Caco-2 (cell line): ENCODE measurements at regions of chr1 and their contacts with region 1.

Region 1: GRCh38 chr1:221741711-221742554 is at the start of gene DUSP10:
- DNase-seq: peak; percentile 97 to 98
- H3K4me3 ChIP-seq: peak within 1 kb of the TSS; percentile 68
- H3K4me3 Mint-ChIP-seq: no peak within 1 kb of the TSS
- H3K27ac Mint-ChIP-seq: no peak within 1 kb of the TSS
- H3K4me1 ChIP-seq: 0 out of 2 replicates have a peak, but pooled peaks cover 7% of the 10 kb centered on the region
- H3K4me1 Mint-ChIP-seq: no peaks in the 10 kb centered on the region
- H3K27me3 ChIP-seq: no peaks in the 10 kb centered on the region
- H3K27me3 Mint-ChIP-seq: no peaks in the 10 kb centered on the region
- CTCF ChIP-seq: no peak
- total RNA-seq, gene DUSP10: 2.0 and 2.1 TPM in 2 replicates

Region 2: DNA sequence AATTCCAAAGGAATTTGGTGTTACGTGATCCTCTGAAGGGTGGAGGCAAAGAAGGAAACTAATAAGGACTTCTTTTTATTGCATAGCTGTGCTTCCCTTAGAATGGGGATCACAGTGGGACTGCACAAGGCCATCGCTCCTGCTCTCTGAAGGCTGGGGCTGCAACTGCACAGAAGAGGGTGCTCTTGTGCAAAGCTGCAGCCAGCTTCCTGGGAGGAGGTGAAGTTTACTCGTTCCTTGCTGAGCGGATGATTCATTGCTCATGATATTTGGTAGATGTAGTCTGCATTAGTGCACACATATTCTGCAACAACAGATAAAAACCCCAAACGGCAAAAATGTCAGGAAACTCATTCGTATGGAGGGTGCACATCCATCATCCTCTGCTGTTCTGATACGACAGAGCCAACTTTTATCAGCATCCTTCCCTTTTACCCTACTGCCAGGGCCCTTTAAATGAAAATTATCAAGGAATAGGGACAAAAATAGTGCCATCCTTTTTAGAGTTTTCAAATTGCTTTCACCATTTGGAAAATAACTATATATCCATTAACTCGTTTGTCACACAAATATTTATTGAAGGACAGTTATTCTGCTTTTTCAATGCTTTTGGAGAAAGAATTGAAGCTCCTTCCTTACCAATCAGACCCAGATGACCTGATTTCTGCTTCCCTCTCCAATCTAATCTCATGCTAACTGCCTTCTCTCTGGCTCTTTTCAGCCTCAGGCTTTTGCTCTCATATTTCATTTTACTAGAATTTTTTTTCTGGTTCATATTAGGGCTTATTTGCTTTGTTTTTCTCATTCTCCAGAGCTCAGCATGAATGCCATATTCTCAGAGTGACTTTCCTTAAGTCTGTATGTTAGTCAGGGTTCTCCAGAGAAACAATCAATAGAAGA is 263.6 kb before region 1 on chr1:
- CTCF ChIA-PET with region 1: no interaction called
- POLR2A ChIA-PET with region 1: no interaction called
- intact Hi-C with region 1: loop called (anchors 1 kb)
- DNase-seq: peak; percentile 39 to 56
- H3K4me3 ChIP-seq: no peak overlapping the region
- H3K4me3 Mint-ChIP-seq: no peak overlapping the region
- H3K27ac Mint-ChIP-seq: no peak overlapping the region
- H3K4me1 ChIP-seq: no peaks in the 10 kb centered on the region
- H3K4me1 Mint-ChIP-seq: no peaks in the 10 kb centered on the region
- H3K27me3 ChIP-seq: no peaks in the 10 kb centered on the region
- H3K27me3 Mint-ChIP-seq: peaks cover 22% of the 10 kb centered on the region
- CTCF ChIP-seq: peak; percentile 54 to 78

Region 3: GRCh38 chr1:221667504-221667903 is 74.4 kb before region 1 on chr1:
- CTCF ChIA-PET with region 1: no interaction called
- POLR2A ChIA-PET with region 1: no interaction called
- intact Hi-C with region 1: loop called (anchors 5 kb)
- DNase-seq: no peak
- H3K4me3 ChIP-seq: no peak overlapping the region
- H3K4me3 Mint-ChIP-seq: no peak overlapping the region
- H3K27ac Mint-ChIP-seq: no peak overlapping the region
- H3K4me1 ChIP-seq: no peaks in the 10 kb centered on the region
- H3K4me1 Mint-ChIP-seq: peaks cover 17% of the 10 kb centered on the region
- H3K27me3 ChIP-seq: no peaks in the 10 kb centered on the region
- H3K27me3 Mint-ChIP-seq: peaks cover 4% of the 10 kb centered on the region
- CTCF ChIP-seq: no peak

Region 4: DNA sequence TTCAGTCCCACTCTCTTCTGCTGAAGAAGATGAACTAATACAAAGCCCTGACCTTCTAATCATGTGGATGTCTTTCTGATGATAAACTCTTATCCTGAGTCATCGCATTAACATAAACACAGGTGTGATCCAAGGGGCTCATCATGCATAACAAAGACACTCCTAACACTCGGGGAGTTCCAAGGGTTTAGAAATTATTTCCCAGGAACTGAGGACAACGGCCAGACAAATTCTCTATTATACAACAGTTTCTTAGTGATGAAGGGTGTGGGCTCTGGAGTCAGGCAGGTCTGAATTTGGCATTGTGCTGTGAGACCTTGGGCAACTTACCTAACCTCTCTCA is 18.1 kb before region 1 on chr1:
- CTCF ChIA-PET with region 1: no interaction called
- POLR2A ChIA-PET with region 1: no interaction called
- intact Hi-C with region 1: no loop called
- DNase-seq: no peak
- H3K4me3 ChIP-seq: no peak overlapping the region
- H3K4me3 Mint-ChIP-seq: no peak overlapping the region
- H3K27ac Mint-ChIP-seq: no peak overlapping the region
- H3K4me1 ChIP-seq: peaks cover 5% of the 10 kb centered on the region
- H3K4me1 Mint-ChIP-seq: peaks cover under 1% of the 10 kb centered on the region
- H3K27me3 ChIP-seq: no peaks in the 10 kb centered on the region
- H3K27me3 Mint-ChIP-seq: no peaks in the 10 kb centered on the region
- CTCF ChIP-seq: no peak

Region 5: GRCh38 chr1:221783936-221784335 is 42.0 kb after region 1 on chr1:
- CTCF ChIA-PET with region 1: no interaction called
- POLR2A ChIA-PET with region 1: no interaction called
- intact Hi-C with region 1: no loop called
- DNase-seq: no peak
- H3K4me3 ChIP-seq: no peak overlapping the region
- H3K4me3 Mint-ChIP-seq: no peak overlapping the region
- H3K27ac Mint-ChIP-seq: no peak overlapping the region
- H3K4me1 ChIP-seq: no peaks in the 10 kb centered on the region
- H3K4me1 Mint-ChIP-seq: no peaks in the 10 kb centered on the region
- H3K27me3 ChIP-seq: no peaks in the 10 kb centered on the region
- H3K27me3 Mint-ChIP-seq: peaks cover 9% of the 10 kb centered on the region
- CTCF ChIP-seq: no peak

Region 6: GRCh38 chr1:221994274-221994698 is 252.4 kb after region 1 on chr1:
- CTCF ChIA-PET with region 1: no interaction called
- POLR2A ChIA-PET with region 1: no interaction called
- intact Hi-C with region 1: loop called (anchors 10 kb)
- DNase-seq: no peak
- H3K4me3 ChIP-seq: no peak overlapping the region
- H3K4me3 Mint-ChIP-seq: no peak overlapping the region
- H3K27ac Mint-ChIP-seq: no peak overlapping the region
- H3K4me1 ChIP-seq: no peaks in the 10 kb centered on the region
- H3K4me1 Mint-ChIP-seq: no peaks in the 10 kb centered on the region
- H3K27me3 ChIP-seq: no peaks in the 10 kb centered on the region
- H3K27me3 Mint-ChIP-seq: no peaks in the 10 kb centered on the region
- CTCF ChIP-seq: no peak

Region 7: DNA sequence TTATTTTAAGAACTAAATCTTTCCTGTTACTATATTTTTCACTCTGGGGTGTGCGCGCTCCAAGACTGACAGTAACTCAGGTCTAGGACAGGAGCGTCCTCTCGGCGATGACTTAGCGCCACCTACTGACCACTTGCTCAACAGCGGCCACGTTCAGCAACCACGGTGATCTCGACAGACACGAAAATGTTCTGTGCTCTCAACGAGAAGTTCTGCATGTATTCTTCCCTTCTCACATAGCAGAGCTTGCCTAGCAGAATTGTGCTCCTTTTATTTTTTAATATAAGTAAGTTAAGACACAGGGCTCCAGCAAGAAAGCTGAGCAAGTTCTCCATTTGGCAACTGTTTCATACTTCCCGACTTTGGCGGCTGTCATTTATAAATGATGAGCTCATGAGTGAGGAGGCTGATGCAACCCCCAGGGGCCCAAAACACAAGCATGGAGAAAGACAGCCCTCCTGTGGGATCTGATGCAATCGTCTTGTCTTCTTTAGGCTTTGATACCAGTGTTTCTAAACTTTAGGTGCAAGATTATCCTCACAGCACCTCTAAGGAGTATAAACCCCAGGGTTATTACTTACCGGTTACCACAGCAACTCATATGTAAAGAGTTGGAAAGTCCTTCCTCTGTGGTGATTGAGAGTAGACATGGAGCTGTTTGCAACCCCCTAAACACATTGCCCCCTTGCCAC is 713.4 kb after region 1 on chr1:
- CTCF ChIA-PET with region 1: no interaction called
- POLR2A ChIA-PET with region 1: no interaction called
- intact Hi-C with region 1: loop called (anchors 10 kb)
- DNase-seq: peak; percentile 75 to 81
- H3K4me3 ChIP-seq: no peak overlapping the region
- H3K4me3 Mint-ChIP-seq: peak overlapping the region; percentile 4
- H3K27ac Mint-ChIP-seq: no peak overlapping the region
- H3K4me1 ChIP-seq: no peaks in the 10 kb centered on the region
- H3K4me1 Mint-ChIP-seq: no peaks in the 10 kb centered on the region
- H3K27me3 ChIP-seq: no peaks in the 10 kb centered on the region
- H3K27me3 Mint-ChIP-seq: peaks cover 6% of the 10 kb centered on the region
- CTCF ChIP-seq: peak; percentile 81 to 90